BJ (cell line): ENCODE measurements at regions of chr1 and their contacts with region 1.

Region 1: GRCh38 chr1:54305906-54306514 is 100.2 kb downstream of the SSBP3 start:
- DNase-seq: no peak
- H3K4me3 ChIP-seq: no peak overlapping the region
- H3K27me3 ChIP-seq: no peaks in the 10 kb centered on the region
- CTCF ChIP-seq: no peak

Region 2: GRCh38 chr1:54294887-54295286 is 11.1 kb before region 1 on chr1:
- CTCF ChIA-PET with region 1: interaction called, 4 read pairs
- POLR2A ChIA-PET with region 1: interaction called, 12 read pairs
- DNase-seq: no peak
- H3K4me3 ChIP-seq: no peak overlapping the region
- H3K27me3 ChIP-seq: no peaks in the 10 kb centered on the region
- CTCF ChIP-seq: no peak